ENCODE measurements at regions of chr1 and their contacts with region 1.

Region 1: GRCh38 chr1:203930331-203930730 is 68.9 kb downstream of the SNRPE start:
- DNase-seq: no peak
- H3K4me3 ChIP-seq: no peak overlapping the region
- H3K27ac ChIP-seq: no peak overlapping the region
- H3K4me1 ChIP-seq: peaks cover 37% of the 10 kb centered on the region
- CTCF ChIP-seq: no peak

Region 2: DNA sequence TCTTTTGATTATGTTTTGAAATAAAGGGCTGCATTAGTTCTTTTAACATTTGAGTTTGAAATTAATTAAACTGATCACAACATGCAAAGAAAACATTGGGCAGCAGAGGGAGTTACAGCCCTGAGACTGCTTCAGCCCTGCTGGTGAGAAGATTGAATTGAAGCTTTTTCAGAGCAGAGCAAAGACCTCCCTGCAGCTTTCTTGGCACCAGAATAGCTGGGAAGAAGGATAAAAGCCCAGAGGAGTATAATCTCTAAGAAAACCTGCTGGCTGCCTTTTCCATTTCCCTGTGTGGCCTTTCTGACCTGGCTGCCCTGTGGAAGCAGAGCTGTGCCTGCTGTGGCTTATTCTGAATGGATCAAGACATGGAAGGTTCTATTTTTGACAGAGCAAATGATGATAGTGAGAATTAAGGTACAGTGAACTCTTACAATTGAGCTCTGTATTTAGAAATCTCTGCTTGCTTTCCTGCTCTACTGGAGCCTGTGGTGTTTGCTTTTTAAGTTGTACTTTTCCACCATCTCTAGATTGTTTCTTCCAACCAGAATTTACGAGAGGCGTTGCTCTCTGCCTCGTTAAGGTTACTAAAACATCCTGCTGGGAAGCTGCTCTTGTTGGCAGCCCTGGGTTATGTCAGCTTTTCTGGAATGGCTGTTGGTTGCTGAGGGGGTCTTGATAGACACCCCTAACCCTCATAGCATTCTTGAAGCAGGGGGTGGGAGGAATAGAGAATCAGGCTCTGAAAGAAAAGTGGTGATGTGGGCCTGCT is 59.0 kb before region 1 on chr1:
- CTCF ChIA-PET with region 1: interaction called, 3 read pairs
- POLR2A ChIA-PET with region 1: interaction called, 4 read pairs
- intact Hi-C with region 1: loop called (anchors 2 kb)
- DNase-seq: peak; percentile 72
- H3K4me3 ChIP-seq: no peak overlapping the region
- H3K27ac ChIP-seq: no peak overlapping the region
- H3K4me1 ChIP-seq: no peaks in the 10 kb centered on the region
- CTCF ChIP-seq: peak; percentile 91

Region 3: DNA sequence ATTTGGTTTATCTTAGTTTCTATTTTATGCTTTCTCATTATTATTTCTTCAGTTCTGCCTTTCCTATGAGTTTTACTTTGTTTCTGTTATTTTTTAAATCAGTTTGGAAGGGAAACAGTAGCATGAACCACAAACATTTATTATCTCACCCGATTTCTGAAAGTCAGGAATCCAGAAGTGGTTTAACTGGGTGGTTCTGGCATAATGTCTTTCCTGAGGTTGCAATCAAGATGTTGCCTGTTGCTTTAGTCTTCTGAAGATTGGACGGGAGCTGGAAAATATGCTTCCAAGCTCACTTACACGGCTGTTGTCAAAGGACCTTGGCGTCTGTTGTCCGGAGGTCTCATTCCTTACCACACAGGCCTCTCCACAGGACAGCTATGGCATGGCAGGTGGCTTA is 18.5 kb before region 1 on chr1:
- CTCF ChIA-PET with region 1: no interaction called
- POLR2A ChIA-PET with region 1: no interaction called
- intact Hi-C with region 1: loop called (anchors 2 kb)
- DNase-seq: no peak
- H3K4me3 ChIP-seq: no peak overlapping the region
- H3K27ac ChIP-seq: no peak overlapping the region
- H3K4me1 ChIP-seq: peaks cover 5% of the 10 kb centered on the region
- CTCF ChIP-seq: no peak

Region 4: GRCh38 chr1:203944651-203945404 is 14.5 kb after region 1 on chr1:
- CTCF ChIA-PET with region 1: interaction called, 3 read pairs
- POLR2A ChIA-PET with region 1: interaction called, 28 read pairs
- intact Hi-C with region 1: no loop called
- DNase-seq: no peak
- H3K4me3 ChIP-seq: no peak overlapping the region
- H3K27ac ChIP-seq: no peak overlapping the region
- H3K4me1 ChIP-seq: peaks cover 19% of the 10 kb centered on the region
- CTCF ChIP-seq: no peak